ENCODE measurements at regions of chrX and their contacts with region 1.

Region 1: GRCh38 chrX:96684339-96685209 is at the start of gene DIAPH2:
- DNase-seq: peak; percentile 85 to 92
- ATAC-seq: peak; percentile 89
- H3K4me3 ChIP-seq: peak within 1 kb of the TSS; percentile 61 to 87
- H3K27ac ChIP-seq: peak within 1 kb of the TSS in 1 of 2 donors; percentile 74
- H3K4me1 ChIP-seq: no peaks in the 10 kb centered on the region
- H3K27me3 ChIP-seq: no peaks in the 10 kb centered on the region
- total RNA-seq, gene DIAPH2: 44.8 to 48.4 TPM

Region 2: GRCh38 chrX:96361844-96362243 is 322.7 kb before region 1 on chrX:
- intact Hi-C with region 1: no loop called
- DNase-seq: no peak
- ATAC-seq: no peak
- H3K4me3 ChIP-seq: no peak overlapping the region
- H3K27ac ChIP-seq: no peak overlapping the region
- H3K4me1 ChIP-seq: no peaks in the 10 kb centered on the region
- H3K27me3 ChIP-seq: no peaks in the 10 kb centered on the region

Region 3: DNA sequence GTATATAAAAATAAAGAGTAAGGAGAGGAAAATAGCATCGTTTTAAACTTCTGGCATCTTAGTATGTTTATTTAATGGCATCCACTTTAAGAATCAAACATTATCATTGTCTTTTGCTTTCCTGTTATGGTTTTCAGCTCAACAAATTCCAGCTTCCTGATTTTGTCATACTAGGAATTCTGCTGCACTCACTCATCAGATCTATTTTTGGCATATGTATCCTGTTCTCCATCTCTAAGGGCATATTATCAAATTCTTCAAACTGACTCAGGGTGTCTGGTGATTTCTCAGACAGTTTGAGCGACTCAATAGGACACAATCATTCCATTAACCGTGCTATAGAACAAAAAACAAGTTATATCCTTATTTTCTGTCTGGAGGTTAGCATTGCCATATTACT is 248.5 kb before region 1 on chrX:
- intact Hi-C with region 1: loop called in 1 of 2 experiments (anchors 10 kb)
- DNase-seq: no peak
- ATAC-seq: no peak
- H3K4me3 ChIP-seq: no peak overlapping the region
- H3K27ac ChIP-seq: no peak overlapping the region
- H3K4me1 ChIP-seq: peaks cover 0 to 2% of the 10 kb centered on the region in 2 donors
- H3K27me3 ChIP-seq: no peaks in the 10 kb centered on the region

Region 4: DNA sequence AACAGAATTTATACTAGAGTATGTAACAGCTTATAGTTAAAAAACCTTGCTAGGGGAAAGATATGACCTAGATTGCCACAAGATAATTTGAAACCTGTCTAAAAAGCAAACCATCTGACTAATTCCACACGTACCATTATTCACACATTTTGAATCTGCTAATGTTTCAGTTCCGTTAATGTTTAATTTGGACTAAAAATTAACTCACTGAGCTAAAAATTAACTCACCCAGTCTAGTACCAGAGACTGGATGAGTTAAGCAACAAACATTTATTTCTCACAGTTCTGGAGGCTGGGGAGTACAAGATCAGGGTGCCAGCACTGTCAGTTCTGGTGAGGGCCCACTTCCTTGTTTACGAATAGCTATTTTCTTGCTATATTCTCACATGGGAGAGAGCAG is 231.4 kb before region 1 on chrX:
- intact Hi-C with region 1: no loop called
- DNase-seq: no peak
- ATAC-seq: no peak
- H3K4me3 ChIP-seq: no peak overlapping the region
- H3K27ac ChIP-seq: no peak overlapping the region
- H3K4me1 ChIP-seq: no peaks in the 10 kb centered on the region
- H3K27me3 ChIP-seq: no peaks in the 10 kb centered on the region